GM12878 (cell line): ENCODE measurements at regions of chr2 and their contacts with region 1.

Region 1: GRCh38 chr2:219160186-219161017 is at the start of gene NHEJ1:
- DNase-seq: peak; percentile 65
- ATAC-seq: peak; percentile 97
- H3K4me3 ChIP-seq: peak within 1 kb of the TSS; percentile 85
- H3K27ac ChIP-seq: peak within 1 kb of the TSS; percentile 78
- H3K4me1 ChIP-seq: peaks cover 4% of the 10 kb centered on the region; the same call in 1 of the 2 replicates
- H3K27me3 ChIP-seq: no peaks in the 10 kb centered on the region
- CTCF ChIP-seq: peak; percentile 89 to 99 (median 97); a peak in 5 of 6 replicates
- EP300 ChIP-seq: no peak
- POLR2A ChIP-seq: peak; percentile 87
- RAD21 ChIP-seq: peak; percentile 82
- polyA plus RNA-seq, gene NHEJ1: 17.8 to 20.2 TPM

Region 2: DNA sequence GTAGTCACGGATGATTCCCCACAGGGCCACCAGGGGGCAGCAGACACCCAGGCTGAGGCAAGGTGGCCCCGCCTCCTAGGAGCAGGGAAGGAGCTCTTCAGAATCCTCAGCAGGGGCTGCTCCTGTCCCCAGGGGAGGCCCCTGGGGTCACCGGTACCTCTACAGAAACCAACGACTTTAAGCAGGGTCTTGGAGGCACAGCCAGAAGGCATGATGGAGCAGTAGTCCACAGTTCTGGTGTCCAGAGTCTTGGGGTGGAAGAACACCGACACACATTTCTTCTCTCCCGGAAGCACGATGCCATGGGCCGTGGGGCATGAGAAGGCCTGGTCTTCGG is 130.6 kb before region 1 on chr2:
- CTCF ChIA-PET with region 1: interaction called, 100 read pairs
- POLR2A ChIA-PET with region 1: no interaction called
- RAD21 ChIA-PET with region 1: interaction called, 41 read pairs
- SMC1A ChIA-PET with region 1: interaction called, 21 read pairs
- in situ Hi-C with region 1: no loop called
- intact Hi-C with region 1: loop called (anchors 1 kb)
- DNase-seq: no peak
- ATAC-seq: peak; percentile 97
- H3K4me3 ChIP-seq: no peak overlapping the region
- H3K27ac ChIP-seq: no peak overlapping the region
- H3K4me1 ChIP-seq: no peaks in the 10 kb centered on the region
- H3K27me3 ChIP-seq: no peaks in the 10 kb centered on the region; a peak in 2 of 4 replicates
- CTCF ChIP-seq: peak; percentile 92 to 98 (median 93)
- EP300 ChIP-seq: no peak
- POLR2A ChIP-seq: no peak
- RAD21 ChIP-seq: peak; percentile 82

Region 3: GRCh38 chr2:219119422-219120043 is 40.9 kb before region 1 on chr2:
- CTCF ChIA-PET with region 1: interaction called, 63 read pairs
- POLR2A ChIA-PET with region 1: no interaction called
- RAD21 ChIA-PET with region 1: no interaction called
- SMC1A ChIA-PET with region 1: interaction called, 33 read pairs
- in situ Hi-C with region 1: no loop called
- intact Hi-C with region 1: no loop called
- DNase-seq: peak; percentile 5
- ATAC-seq: peak; percentile 89
- H3K4me3 ChIP-seq: no peak overlapping the region
- H3K27ac ChIP-seq: no peak overlapping the region
- H3K4me1 ChIP-seq: no peaks in the 10 kb centered on the region
- H3K27me3 ChIP-seq: no peaks in the 10 kb centered on the region
- CTCF ChIP-seq: peak; percentile 68 to 74 (median 71)
- EP300 ChIP-seq: no peak
- POLR2A ChIP-seq: no peak
- RAD21 ChIP-seq: peak; percentile 90

Region 4: DNA sequence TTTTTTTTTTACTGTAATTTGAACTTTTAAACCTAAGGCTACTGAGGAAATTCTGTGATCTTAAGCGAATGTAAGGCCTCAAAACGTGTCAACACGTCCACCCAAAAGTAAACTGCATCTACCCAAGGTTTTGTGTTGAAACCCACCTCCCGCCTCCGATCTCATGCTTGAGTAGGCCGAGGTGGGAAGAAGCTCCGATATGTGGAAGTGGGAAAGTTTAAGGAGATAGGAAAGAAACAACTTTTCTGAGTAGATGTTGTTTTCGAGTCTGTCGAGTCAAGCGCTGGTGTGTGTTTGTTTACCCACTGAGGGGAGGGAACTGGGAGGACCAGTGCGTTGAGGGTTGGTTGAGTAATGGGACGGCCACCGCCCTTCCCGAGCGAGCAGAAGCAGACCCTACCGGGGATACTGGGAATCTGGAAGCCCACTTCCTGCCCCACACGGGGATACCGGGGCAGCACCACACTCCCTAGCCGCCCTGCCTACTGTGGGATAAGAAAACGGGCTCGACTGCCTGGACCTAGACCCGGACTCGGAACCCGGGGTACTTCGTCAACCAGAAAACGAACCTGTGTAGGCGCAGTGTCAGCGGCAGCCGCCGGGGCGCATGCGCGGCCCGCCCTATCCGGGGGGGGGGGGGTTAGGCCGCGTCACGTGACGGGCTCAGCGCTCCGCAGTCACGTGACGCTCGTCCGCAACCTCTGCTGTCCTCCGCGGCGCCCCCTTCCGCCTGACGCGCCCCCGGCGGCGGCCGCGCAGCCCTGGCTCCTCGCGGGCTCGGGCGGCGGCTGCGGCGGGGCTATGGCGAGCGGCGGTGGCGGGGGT is 17.4 kb after region 1 on chr2 and contains the start of gene RETREG2:
- CTCF ChIA-PET with region 1: interaction called, 13 read pairs
- POLR2A ChIA-PET with region 1: no interaction called
- RAD21 ChIA-PET with region 1: interaction called, 6 read pairs
- SMC1A ChIA-PET with region 1: interaction called, 13 read pairs
- in situ Hi-C with region 1: no loop called
- intact Hi-C with region 1: loop called (anchors 1 kb)
- DNase-seq: peak; percentile 72
- ATAC-seq: peak; percentile 62
- H3K4me3 ChIP-seq: peak within 1 kb of the TSS; percentile 83
- H3K27ac ChIP-seq: peak within 1 kb of the TSS; percentile 98
- H3K4me1 ChIP-seq: peaks cover 10% of the 10 kb centered on the region
- H3K27me3 ChIP-seq: no peaks in the 10 kb centered on the region
- CTCF ChIP-seq: peak; percentile 26 to 53 (median 35); a peak in 4 of 6 replicates
- EP300 ChIP-seq: peak in 1 of 2 experiments; percentile 50; a peak in 2 of 4 replicates
- POLR2A ChIP-seq: peak; percentile 91
- RAD21 ChIP-seq: no peak
- polyA plus RNA-seq, gene RETREG2: 10.1 to 25.2 TPM

Region 5: DNA sequence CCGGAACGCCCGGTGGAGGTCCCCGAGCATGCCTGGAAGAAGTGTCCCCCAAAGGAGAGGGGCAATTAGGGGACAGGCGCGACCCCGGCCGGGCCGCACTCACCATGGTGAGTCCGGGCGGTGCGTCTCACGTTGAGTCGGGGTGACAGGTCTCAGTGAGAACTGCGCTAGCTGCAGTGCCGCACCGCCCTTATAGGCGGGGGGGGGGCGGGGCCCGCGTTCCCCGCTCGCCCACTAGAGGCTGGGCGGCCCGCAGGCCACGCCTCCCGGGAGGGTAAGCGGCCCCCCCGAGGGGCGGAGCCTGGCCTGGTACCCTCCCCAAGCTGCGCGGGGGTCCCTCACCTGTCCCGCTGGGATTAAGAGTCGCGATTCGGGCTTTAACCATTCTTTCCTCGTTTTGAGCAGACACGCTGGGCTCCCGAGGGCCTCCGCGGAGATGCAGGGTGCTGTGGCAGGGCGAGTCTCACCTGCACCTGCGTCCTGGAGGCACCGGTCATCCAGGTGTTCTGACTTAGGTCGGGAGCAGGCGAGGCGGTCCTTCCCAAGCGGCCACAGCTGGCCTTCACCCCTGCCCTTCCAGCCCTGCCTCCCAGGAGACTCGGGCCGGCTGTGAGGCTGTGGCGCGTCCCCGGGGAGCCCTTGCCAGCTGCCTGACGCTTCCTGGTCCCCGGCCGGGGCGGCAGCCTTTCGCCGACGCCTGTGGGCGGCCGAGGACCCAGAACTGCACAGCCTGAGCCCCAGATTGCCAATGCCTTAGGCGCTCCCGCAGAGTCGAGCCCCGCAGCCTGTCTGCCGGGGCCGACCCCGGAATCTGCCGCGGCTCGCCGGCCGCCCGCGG is 93.6 kb after region 1 on chr2 and contains the start of gene TUBA4A:
- CTCF ChIA-PET with region 1: interaction called, 5 read pairs
- POLR2A ChIA-PET with region 1: interaction called, 4 read pairs
- RAD21 ChIA-PET with region 1: interaction called, 5 read pairs
- SMC1A ChIA-PET with region 1: interaction called, 3 read pairs
- in situ Hi-C with region 1: no loop called
- intact Hi-C with region 1: loop called (anchors 2 kb)
- DNase-seq: no peak
- ATAC-seq: peak; percentile 83
- H3K4me3 ChIP-seq: peak within 1 kb of the TSS; percentile 86
- H3K27ac ChIP-seq: peak within 1 kb of the TSS; percentile 77
- H3K4me1 ChIP-seq: peaks cover 22% of the 10 kb centered on the region
- H3K27me3 ChIP-seq: no peaks in the 10 kb centered on the region
- CTCF ChIP-seq: no peak
- EP300 ChIP-seq: 0 out of 4 replicates have a peak, but pooled peaks of 1 of the 2 experiments have one; percentile 23
- POLR2A ChIP-seq: peak; percentile 97
- RAD21 ChIP-seq: no peak
- polyA plus RNA-seq, gene TUBA4A: 58.2 to 88.6 TPM

Region 6: DNA sequence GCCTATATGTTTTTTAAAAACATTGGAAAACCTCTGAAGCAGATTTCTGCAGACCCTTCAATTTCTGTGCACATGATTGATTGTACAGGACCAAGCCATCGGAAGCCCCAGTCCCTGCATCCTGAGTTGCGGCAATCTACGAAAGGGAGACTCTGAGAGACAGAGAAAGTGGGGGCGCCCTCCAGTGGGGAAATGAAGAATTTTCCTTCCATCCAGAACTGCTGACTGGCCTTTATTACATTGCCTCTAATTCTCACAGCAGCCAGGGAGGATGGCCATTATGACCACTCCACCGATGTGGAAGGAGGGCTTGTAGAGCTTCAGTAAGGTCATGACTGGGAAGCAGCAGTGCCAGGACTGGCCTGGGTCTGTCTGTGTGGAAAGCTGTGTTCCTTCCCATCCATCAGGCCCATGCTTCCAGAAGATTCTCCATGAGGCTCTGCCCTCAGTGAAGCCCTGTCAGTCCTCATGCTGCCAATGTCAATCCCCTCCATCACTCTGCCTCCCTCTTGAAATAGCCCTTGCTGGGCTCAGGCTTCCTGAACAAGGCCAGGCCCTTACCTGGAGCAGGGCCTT is 192.1 kb after region 1 on chr2:
- CTCF ChIA-PET with region 1: interaction called, 9 read pairs
- POLR2A ChIA-PET with region 1: no interaction called
- RAD21 ChIA-PET with region 1: interaction called, 9 read pairs
- SMC1A ChIA-PET with region 1: interaction called, 4 read pairs
- in situ Hi-C with region 1: no loop called
- intact Hi-C with region 1: loop called (anchors 1 kb)
- DNase-seq: no peak
- ATAC-seq: peak; percentile 97
- H3K4me3 ChIP-seq: no peak overlapping the region
- H3K27ac ChIP-seq: no peak overlapping the region
- H3K4me1 ChIP-seq: no peaks in the 10 kb centered on the region
- H3K27me3 ChIP-seq: peaks cover 0 to 2% of the 10 kb centered on the region in 2 experiments; a peak in 2 of 4 replicates
- CTCF ChIP-seq: peak; percentile 55 to 80 (median 73)
- EP300 ChIP-seq: no peak
- POLR2A ChIP-seq: no peak
- RAD21 ChIP-seq: peak; percentile 64

Region 7: DNA sequence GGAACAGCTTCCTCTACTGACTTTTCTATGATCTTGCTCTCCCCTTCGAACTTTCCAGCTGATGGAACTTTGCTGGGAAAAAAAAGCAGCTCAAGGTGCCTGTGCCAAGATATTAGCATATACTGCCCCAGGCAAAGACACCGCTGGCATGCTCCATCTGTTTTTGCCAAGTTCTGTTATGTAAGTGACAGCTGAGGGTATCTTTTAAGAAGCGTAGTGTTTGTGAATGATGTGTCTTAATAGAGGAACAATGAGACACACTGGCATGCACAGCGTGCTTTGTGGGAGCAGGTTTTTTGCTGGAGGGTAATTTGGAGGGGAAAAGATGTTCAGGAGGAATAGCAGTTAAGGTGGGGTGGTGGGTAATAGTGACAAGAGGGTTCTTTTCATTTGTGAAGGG is 514.8 kb after region 1 on chr2:
- CTCF ChIA-PET with region 1: no interaction called
- POLR2A ChIA-PET with region 1: no interaction called
- RAD21 ChIA-PET with region 1: no interaction called
- SMC1A ChIA-PET with region 1: no interaction called
- in situ Hi-C with region 1: no loop called
- intact Hi-C with region 1: no loop called
- DNase-seq: no peak
- ATAC-seq: no peak
- H3K4me3 ChIP-seq: no peak overlapping the region
- H3K27ac ChIP-seq: no peak overlapping the region
- H3K4me1 ChIP-seq: no peaks in the 10 kb centered on the region
- H3K27me3 ChIP-seq: peaks cover 0 to 2% of the 10 kb centered on the region in 2 experiments; a peak in 2 of 4 replicates
- CTCF ChIP-seq: no peak
- EP300 ChIP-seq: no peak
- POLR2A ChIP-seq: no peak
- RAD21 ChIP-seq: no peak